ENCODE measurements at regions of chr10 and their contacts with region 1.

Region 1: GRCh38 chr10:132637477-132638129 is 100.0 kb downstream of the INPP5A start:
- DNase-seq: peak; percentile 20 to 60 (median 39)
- ATAC-seq: peak; percentile 85
- H3K4me3 ChIP-seq: no peak overlapping the region
- H3K27ac ChIP-seq: no peak overlapping the region
- H3K4me1 ChIP-seq: peaks cover 0 to 7% of the 10 kb centered on the region in 2 experiments; a peak in 2 of 5 replicates
- H3K27me3 ChIP-seq: peaks cover 0 to 23% of the 10 kb centered on the region in 2 experiments; a peak in 2 of 5 replicates
- CTCF ChIP-seq: peak; percentile 52 to 75 (median 63)
- EP300 ChIP-seq: no peak
- POLR2A ChIP-seq: no peak
- RAD21 ChIP-seq: peak; percentile 74 to 79

Region 2: DNA sequence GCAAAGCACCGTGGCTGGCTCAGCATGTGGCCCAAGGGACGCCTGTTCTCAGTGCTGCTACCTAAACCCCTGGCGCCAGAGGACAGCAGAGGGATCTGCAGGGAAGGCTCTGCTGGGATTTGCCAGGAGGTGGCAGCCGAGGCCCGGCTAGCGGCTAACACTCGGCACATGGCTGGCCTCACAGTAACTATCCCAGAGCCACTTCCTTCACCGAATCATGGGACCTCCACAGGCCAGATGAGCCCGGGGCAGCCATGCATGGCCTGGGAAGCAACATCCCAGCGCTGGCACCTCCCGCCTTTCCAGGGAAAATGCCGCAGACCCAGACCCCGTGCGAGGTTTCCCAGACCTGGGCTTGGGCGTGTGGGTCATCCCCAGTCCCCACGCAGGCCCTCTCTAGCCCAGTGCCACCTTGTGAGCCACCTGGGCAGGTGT is 414.4 kb before region 1 on chr10:
- CTCF ChIA-PET with region 1: no interaction called
- POLR2A ChIA-PET with region 1: no interaction called
- in situ Hi-C with region 1: loop called (anchors 10 kb)
- intact Hi-C with region 1: no loop called
- DNase-seq: peak; percentile 71 to 80 (median 74)
- ATAC-seq: peak; percentile 100
- H3K4me3 ChIP-seq: no peak overlapping the region
- H3K27ac ChIP-seq: no peak overlapping the region
- H3K4me1 ChIP-seq: peaks cover 0 to 25% of the 10 kb centered on the region in 2 experiments; a peak in 2 of 5 replicates
- H3K27me3 ChIP-seq: peaks cover 0 to 14% of the 10 kb centered on the region in 2 experiments; a peak in 2 of 5 replicates
- CTCF ChIP-seq: peak; percentile 91 to 100 (median 99)
- EP300 ChIP-seq: no peak
- POLR2A ChIP-seq: no peak
- RAD21 ChIP-seq: peak; percentile 89 to 94

Region 3: GRCh38 chr10:132387764-132388210 is 249.8 kb before region 1 on chr10:
- CTCF ChIA-PET with region 1: no interaction called
- POLR2A ChIA-PET with region 1: no interaction called
- in situ Hi-C with region 1: loop called (anchors 10 kb)
- intact Hi-C with region 1: loop called (anchors 5 kb)
- DNase-seq: peak; percentile 68 to 89 (median 88)
- ATAC-seq: peak; percentile 77
- H3K4me3 ChIP-seq: no peak overlapping the region
- H3K27ac ChIP-seq: no peak overlapping the region
- H3K4me1 ChIP-seq: peaks cover 0 to 37% of the 10 kb centered on the region in 2 experiments; a peak in 4 of 5 replicates
- H3K27me3 ChIP-seq: no peaks in the 10 kb centered on the region; a peak in 1 of 5 replicates
- CTCF ChIP-seq: peak; percentile 45 to 80 (median 69); a peak in 5 of 6 replicates
- EP300 ChIP-seq: no peak
- POLR2A ChIP-seq: no peak
- RAD21 ChIP-seq: peak; percentile 53 to 66; a peak in 3 of 4 replicates

Region 4: GRCh38 chr10:132452631-132453469 is 184.8 kb before region 1 on chr10:
- CTCF ChIA-PET with region 1: interaction called, 13 read pairs
- POLR2A ChIA-PET with region 1: no interaction called
- in situ Hi-C with region 1: loop called (anchors 10 kb)
- intact Hi-C with region 1: loop called (anchors 2 kb)
- DNase-seq: peak; percentile 72 to 91 (median 88)
- ATAC-seq: peak; percentile 85
- H3K4me3 ChIP-seq: no peak overlapping the region
- H3K27ac ChIP-seq: no peak overlapping the region; the same call in 2 of the 3 replicates
- H3K4me1 ChIP-seq: peaks cover 13 to 74% of the 10 kb centered on the region in 2 experiments
- H3K27me3 ChIP-seq: no peaks in the 10 kb centered on the region
- CTCF ChIP-seq: peak; percentile 81 to 91 (median 82)
- EP300 ChIP-seq: no peak
- POLR2A ChIP-seq: no peak
- RAD21 ChIP-seq: peak; percentile 95

Region 5: GRCh38 chr10:132458593-132459300 is 178.9 kb before region 1 on chr10:
- CTCF ChIA-PET with region 1: interaction called, 13 read pairs
- POLR2A ChIA-PET with region 1: interaction called, 3 read pairs
- in situ Hi-C with region 1: loop called (anchors 10 kb)
- intact Hi-C with region 1: loop called (anchors 2 kb)
- DNase-seq: peak; percentile 49 to 68 (median 62)
- ATAC-seq: peak; percentile 85
- H3K4me3 ChIP-seq: no peak overlapping the region
- H3K27ac ChIP-seq: no peak overlapping the region
- H3K4me1 ChIP-seq: peaks cover 4 to 68% of the 10 kb centered on the region in 2 experiments; a peak in 3 of 5 replicates
- H3K27me3 ChIP-seq: peaks cover 0 to 29% of the 10 kb centered on the region in 2 experiments; a peak in 2 of 5 replicates
- CTCF ChIP-seq: peak; percentile 65 to 83 (median 65)
- EP300 ChIP-seq: no peak
- POLR2A ChIP-seq: no peak
- RAD21 ChIP-seq: peak; percentile 85

Region 6: GRCh38 chr10:132536971-132537712 is 100.5 kb before region 1 on chr10:
- CTCF ChIA-PET with region 1: interaction called, 5 read pairs
- POLR2A ChIA-PET with region 1: no interaction called
- in situ Hi-C with region 1: no loop called
- intact Hi-C with region 1: loop called (anchors 10 kb)
- DNase-seq: peak; percentile 96 to 97 (median 96)
- ATAC-seq: peak; percentile 93
- H3K4me3 ChIP-seq: peak overlapping the region; percentile 54
- H3K27ac ChIP-seq: peak overlapping the region; percentile 63; the same call in 1 of the 3 replicates
- H3K4me1 ChIP-seq: peaks cover 11 to 32% of the 10 kb centered on the region in 2 experiments; a peak in 3 of 5 replicates
- H3K27me3 ChIP-seq: peaks cover 2 to 14% of the 10 kb centered on the region in 2 experiments; a peak in 3 of 5 replicates
- CTCF ChIP-seq: peak in 2 of 3 experiments; percentile 39 to 53; a peak in 4 of 6 replicates
- EP300 ChIP-seq: no peak
- POLR2A ChIP-seq: no peak
- RAD21 ChIP-seq: peak in 1 of 2 experiments; percentile 34; a peak in 2 of 4 replicates

Region 7: GRCh38 chr10:132575356-132576201 is 62.0 kb before region 1 on chr10:
- CTCF ChIA-PET with region 1: no interaction called
- POLR2A ChIA-PET with region 1: no interaction called
- in situ Hi-C with region 1: no loop called
- intact Hi-C with region 1: loop called (anchors 5 kb)
- DNase-seq: no peak
- ATAC-seq: no peak
- H3K4me3 ChIP-seq: no peak overlapping the region
- H3K27ac ChIP-seq: no peak overlapping the region
- H3K4me1 ChIP-seq: peaks cover 21 to 55% of the 10 kb centered on the region in 2 experiments
- H3K27me3 ChIP-seq: no peaks in the 10 kb centered on the region
- CTCF ChIP-seq: no peak
- EP300 ChIP-seq: no peak
- POLR2A ChIP-seq: no peak
- RAD21 ChIP-seq: no peak

Region 8: DNA sequence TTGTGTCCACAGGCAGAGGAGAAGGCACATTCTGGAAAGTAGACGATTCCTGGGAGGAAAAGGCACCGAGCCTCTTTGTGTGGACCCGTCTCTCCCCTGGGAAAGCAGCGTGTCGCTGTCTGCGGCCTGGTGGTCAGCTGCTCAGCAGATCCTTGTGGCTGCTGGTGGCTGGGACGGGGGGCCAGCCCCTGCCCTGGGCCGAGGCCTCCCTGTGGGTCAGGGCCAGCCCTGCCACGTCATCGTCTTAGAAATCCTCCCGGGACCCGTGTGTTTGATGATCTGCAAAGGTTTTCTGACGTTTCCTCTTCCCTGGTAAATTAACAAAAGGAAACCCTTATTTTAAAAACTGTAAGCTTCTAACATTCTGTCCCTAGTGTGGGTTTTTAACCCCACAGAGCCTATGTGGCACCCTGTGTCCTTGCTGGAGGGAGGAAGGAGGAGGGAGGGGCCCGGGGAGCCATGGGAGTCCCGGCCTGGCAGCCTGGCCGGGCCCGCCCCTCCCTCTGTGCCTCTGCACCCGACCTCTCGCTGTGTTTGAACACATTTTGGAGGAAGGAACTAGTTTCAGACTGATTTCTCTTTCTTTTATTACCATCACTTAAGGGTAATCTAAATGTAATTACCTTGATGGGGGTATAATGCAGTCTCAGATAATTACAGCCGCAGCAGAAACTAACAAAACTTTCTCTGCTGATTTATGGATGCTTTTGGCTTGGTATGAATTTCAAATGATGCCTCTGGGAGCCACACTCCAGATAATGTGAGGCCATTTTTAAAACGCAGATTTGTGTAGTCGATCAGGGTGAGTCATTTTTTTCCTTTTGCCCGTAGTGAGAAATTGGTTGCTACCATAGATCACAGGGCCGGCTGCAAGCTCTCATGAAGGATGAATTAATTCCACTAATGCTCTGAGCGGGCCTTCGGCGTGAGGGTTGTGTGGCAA is 62.8 kb after region 1 on chr10:
- CTCF ChIA-PET with region 1: no interaction called
- POLR2A ChIA-PET with region 1: no interaction called
- in situ Hi-C with region 1: no loop called
- intact Hi-C with region 1: no loop called
- DNase-seq: no peak
- ATAC-seq: no peak
- H3K4me3 ChIP-seq: no peak overlapping the region
- H3K27ac ChIP-seq: no peak overlapping the region
- H3K4me1 ChIP-seq: no peaks in the 10 kb centered on the region
- H3K27me3 ChIP-seq: no peaks in the 10 kb centered on the region
- CTCF ChIP-seq: no peak
- EP300 ChIP-seq: no peak
- POLR2A ChIP-seq: no peak
- RAD21 ChIP-seq: no peak

Region 9: DNA sequence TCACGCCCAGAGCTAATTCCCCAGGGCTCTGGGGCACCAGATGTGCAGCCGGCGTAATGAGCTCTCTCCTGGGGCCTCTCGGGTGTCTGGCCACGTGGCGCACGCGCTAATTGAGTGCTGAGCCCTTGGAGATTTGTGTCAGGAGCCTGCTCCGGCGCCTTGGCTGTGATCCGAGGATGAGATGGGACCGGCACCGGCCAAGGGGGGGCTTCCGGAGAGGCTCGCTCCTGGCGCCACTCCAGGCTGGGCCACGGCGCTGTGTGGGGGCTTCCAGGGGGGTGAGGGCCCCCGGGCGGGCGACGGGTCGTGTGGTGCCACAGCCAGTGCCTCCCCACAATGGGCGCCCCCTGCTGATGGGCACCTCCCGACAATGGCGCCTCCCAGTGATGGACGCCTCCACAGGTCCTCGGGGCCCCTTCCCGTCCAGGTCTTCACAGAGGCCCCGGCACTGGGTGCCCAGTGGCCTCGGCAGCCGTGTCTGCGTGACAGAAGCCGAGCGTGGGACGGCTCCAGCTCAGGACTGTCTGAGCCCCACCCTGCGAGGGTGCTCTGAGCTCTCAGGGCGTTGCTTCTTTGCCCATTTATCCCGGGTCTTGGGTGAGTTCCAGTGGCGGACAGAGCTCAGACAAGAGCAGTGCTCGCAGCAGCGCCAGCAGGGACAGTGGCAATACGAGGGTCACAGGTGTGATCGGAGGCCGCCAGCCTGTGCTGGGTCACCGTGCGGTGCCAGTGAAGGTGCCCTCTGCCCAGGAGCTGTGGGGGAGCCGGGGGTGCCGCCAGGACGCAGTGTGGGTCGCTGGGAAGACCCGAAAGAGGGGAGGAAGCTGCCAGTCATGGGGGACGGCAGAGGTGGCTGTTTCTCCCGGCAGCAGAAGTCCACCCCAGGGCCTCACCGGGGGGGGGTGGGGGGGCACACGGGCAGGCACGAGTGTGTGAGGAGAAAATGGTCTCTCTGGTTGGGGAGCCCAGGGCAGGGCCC is 156.6 kb after region 1 on chr10:
- CTCF ChIA-PET with region 1: no interaction called
- POLR2A ChIA-PET with region 1: no interaction called
- in situ Hi-C with region 1: no loop called
- intact Hi-C with region 1: no loop called
- DNase-seq: peak in 2 of 4 experiments; percentile 18 to 19
- ATAC-seq: peak; percentile 53; the same call in 2 of the 3 replicates
- H3K4me3 ChIP-seq: no peak overlapping the region
- H3K27ac ChIP-seq: no peak overlapping the region
- H3K4me1 ChIP-seq: peaks cover 0 to 11% of the 10 kb centered on the region in 2 experiments; a peak in 1 of 5 replicates
- H3K27me3 ChIP-seq: peaks cover 2 to 31% of the 10 kb centered on the region in 2 experiments; a peak in 3 of 5 replicates
- CTCF ChIP-seq: peak in 2 of 3 experiments; percentile 28 to 38; a peak in 3 of 6 replicates
- EP300 ChIP-seq: no peak
- POLR2A ChIP-seq: no peak
- RAD21 ChIP-seq: no peak

Measured in K562 (cell line).